ENCODE measurements at regions of chr4 and their contacts with region 1.

Region 1: DNA sequence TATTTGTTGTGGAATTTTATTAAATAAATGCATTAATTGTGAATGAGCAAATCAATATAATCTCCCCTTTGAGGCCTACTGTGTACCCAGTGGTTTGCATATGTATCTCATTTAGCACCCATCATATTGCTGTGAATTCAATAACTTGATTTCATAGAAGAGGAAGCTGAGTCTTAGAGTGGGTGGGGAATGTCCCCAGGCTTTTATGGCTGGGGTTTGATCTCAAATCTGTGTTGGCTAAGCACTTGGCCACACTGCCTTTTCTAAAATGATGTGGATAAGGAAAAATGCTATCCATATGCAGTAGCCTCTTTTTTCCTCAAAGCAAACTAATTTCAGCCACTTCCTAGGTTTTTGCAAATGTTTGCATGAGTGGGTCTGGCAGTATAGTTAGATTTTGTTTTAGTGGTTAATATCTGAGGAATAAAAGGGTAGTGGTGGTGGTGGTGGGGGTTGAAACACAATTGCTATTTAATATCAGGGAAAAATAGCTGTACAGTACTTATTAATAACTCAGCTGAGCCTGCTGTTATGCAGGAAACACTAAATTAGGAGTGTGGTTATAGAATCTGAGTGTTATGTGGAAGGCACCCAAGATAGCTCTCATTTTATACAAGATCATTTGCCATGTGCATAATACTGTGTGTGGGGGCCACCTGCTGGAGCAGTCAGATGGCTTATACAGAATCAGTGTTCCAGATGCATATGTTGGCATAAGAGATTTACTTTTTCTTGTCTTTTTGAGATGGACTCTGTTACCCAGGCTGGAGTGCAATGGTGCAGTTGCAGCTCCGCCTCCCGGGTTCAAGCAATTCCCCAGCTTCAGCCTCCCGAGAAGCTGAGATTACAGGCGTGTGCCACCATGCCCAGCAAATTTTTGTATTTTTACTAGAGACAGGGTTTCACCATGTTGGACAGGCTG is 108.0 kb downstream of the TMEM131L start:
- DNase-seq: peak; percentile 30
- H3K4me3 ChIP-seq: no peak overlapping the region
- H3K27me3 ChIP-seq: no peaks in the 10 kb centered on the region
- CTCF ChIP-seq: peak; percentile 74

Region 2: DNA sequence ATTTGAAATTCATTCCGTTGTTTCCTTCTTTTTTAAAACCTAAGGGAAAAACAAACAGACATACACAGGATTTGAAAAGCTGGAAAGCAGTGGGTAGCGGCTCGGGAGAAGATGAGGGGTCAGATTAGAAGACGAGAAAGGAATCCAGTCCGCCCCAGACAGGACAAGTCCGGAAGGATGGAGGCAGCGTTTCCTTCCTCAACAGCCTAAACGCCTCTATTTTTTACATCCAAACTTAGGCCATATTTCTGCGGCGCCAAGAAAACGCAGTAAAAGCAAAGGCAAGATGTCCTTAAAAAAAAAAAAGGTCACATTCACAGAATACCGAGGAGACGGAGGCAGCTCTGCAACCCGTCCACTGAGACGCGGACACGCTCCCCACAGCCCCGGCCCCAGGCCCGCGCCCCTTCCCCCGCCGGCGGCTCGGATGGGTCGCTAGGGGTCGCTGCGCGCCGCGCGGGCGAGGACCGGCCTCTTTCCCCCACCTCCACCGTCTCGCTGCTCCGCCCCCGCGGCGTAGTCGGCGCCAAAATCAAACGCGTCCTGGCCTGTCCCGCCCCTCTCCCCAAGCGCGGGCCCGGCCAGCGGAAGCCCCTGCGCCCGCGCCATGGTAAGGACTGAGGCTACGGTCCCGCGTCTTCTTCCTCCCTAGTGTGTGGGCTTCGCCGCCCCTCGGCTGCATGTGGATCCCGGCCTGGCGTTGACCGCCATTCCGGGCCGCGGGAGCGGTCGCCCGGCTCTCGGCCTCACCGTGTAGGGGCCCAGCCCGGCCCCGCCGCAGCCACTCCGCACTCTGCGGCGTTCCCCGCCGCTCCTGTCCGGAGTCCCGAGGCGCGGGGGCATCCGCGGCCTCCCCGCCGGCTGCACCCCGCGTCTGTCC is 229.8 kb before region 1 on chr4 and contains the start of gene MND1:
- CTCF ChIA-PET with region 1: interaction called, 93 read pairs
- POLR2A ChIA-PET with region 1: interaction called, 3 read pairs
- DNase-seq: no peak
- H3K4me3 ChIP-seq: peak within 1 kb of the TSS; percentile 77
- H3K27me3 ChIP-seq: no peaks in the 10 kb centered on the region
- CTCF ChIP-seq: peak; percentile 62
- polyA plus RNA-seq, gene MND1: 0.44 and 2.2 TPM in 2 replicates

Region 3: DNA sequence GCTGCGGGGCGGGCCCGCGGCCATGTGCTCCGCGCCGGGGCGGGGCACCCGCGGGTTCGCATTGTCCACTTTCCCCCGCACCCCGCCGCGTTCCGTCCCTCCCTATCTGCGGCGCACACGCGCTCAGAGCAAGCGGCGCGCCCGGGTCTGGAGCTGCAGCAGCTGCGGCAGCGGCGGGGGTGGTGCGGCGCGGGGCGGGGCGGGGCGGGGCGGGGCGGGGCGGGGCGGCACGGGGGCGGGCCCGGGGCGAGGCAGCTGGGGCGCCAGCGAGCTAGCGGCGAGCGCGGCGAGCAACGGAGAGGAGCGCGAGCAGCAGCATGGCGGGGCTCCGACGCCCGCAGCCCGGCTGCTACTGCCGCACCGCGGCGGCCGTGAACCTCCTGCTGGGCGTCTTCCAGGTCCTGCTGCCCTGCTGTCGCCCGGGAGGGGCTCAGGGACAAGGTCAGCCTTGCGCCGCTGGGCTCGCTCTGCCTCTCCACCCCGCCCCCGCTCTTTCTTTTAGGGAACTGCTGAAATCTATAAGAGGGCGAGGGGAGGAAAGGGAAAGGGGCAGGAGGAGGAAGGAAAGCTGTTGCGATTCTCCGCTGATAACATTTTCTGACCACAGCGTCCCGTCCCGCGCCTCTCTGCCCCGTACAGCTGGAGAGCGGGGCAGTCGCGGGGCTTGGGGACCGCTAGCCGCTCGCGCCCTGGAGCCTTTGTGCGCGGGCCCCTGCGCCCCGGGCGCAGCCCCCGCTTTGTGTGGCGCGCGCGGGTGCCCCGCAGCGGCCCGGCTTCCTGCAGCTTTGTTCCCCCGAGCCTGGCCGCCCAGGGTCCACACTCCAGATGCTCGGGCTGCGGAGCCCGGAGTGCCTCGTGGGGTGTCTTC is 107.8 kb before region 1 on chr4 and contains the start of gene TMEM131L:
- CTCF ChIA-PET with region 1: interaction called, 16 read pairs
- POLR2A ChIA-PET with region 1: no interaction called
- DNase-seq: no peak
- H3K4me3 ChIP-seq: peak within 1 kb of the TSS; percentile 91
- H3K27me3 ChIP-seq: no peaks in the 10 kb centered on the region
- CTCF ChIP-seq: peak; percentile 29
- polyA plus RNA-seq, gene TMEM131L: 6.0 and 7.5 TPM in 2 replicates

Region 4: GRCh38 chr4:153731239-153731638 is 157.1 kb after region 1 on chr4:
- CTCF ChIA-PET with region 1: no interaction called
- POLR2A ChIA-PET with region 1: no interaction called
- DNase-seq: peak; percentile 64
- H3K4me3 ChIP-seq: no peak overlapping the region
- H3K27me3 ChIP-seq: no peaks in the 10 kb centered on the region
- CTCF ChIP-seq: no peak

Measured in BJ (cell line).